Right ventricle myocardium inferior (tissue), 1 donor: ENCODE measurements at regions of chr12 and their contacts with region 1.

Region 1: GRCh38 chr12:29743801-29744200 is 39.9 kb downstream of the TMTC1 start:
- DNase-seq: no peak
- ATAC-seq: peak; percentile 42

Region 2: GRCh38 chr12:29562167-29562776 is 181.5 kb before region 1 on chr12:
- intact Hi-C with region 1: loop called (anchors 5 kb)
- DNase-seq: no peak
- ATAC-seq: peak; percentile 81